CD4-positive, alpha-beta T cell (primary cell): ENCODE measurements at regions of chr3 and their contacts with region 1.

Region 1: DNA sequence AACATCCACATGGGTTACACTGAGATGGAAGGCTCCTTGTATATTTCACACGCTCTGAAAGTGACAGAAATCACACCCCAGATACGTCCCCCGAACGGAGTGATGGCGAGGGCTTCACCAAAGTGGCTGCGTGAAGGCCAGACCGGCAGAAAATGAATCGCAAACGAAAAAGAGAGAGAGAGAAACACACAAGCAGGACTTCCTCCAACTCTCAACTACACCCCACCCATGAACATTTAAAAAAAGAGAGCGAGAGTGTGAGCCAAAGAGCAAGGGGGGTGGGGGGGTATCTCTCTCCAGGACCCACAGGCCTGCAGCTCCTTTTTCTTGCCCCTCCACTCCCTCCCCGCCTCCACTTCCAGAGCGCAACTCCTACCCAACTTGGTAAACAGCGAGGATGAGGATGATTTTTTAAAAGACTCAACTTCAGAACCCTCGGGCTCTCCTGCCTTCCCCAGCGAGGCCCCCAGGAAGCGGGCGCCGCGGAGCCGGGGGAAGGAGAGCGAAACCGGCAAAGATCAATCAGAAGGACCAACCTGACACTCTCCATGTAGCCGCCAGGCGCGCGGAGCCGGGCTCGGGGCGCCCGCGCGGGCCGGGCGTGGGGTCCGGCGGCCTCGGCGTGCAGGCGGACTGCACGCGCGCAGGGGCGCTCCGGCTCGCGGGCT is 519.1 kb downstream of the FOXP1 start:
- DNase-seq: peak; percentile 45 to 86 (median 64)
- ATAC-seq: peak; percentile 41
- H3K4me3 ChIP-seq: peak overlapping the region; percentile 71
- H3K4me3 Mint-ChIP-seq: no peak overlapping the region
- H3K27ac ChIP-seq: peak overlapping the region; percentile 72 to 97
- H3K27ac Mint-ChIP-seq: no peak overlapping the region
- H3K4me1 ChIP-seq: peaks cover 29% of the 10 kb centered on the region
- H3K4me1 Mint-ChIP-seq: peaks cover 62% of the 10 kb centered on the region
- H3K27me3 ChIP-seq: no peaks in the 10 kb centered on the region
- H3K27me3 Mint-ChIP-seq: no peaks in the 10 kb centered on the region
- CTCF ChIP-seq: no peak

Region 2: GRCh38 chr3:70716832-70717231 is 347.6 kb before region 1 on chr3:
- CTCF ChIA-PET with region 1: no interaction called
- POLR2A ChIA-PET with region 1: no interaction called
- intact Hi-C with region 1: loop called in 1 of 2 experiments (anchors 10 kb)
- DNase-seq: peak in 5 of 14 experiments; percentile 0 to 25 (median 7)
- ATAC-seq: no peak
- H3K4me3 ChIP-seq: no peak overlapping the region
- H3K4me3 Mint-ChIP-seq: no peak overlapping the region
- H3K27ac ChIP-seq: no peak overlapping the region
- H3K27ac Mint-ChIP-seq: no peak overlapping the region
- H3K4me1 ChIP-seq: no peaks in the 10 kb centered on the region
- H3K4me1 Mint-ChIP-seq: no peaks in the 10 kb centered on the region
- H3K27me3 ChIP-seq: peaks cover 0 to 6% of the 10 kb centered on the region in 2 experiments
- H3K27me3 Mint-ChIP-seq: peaks cover 4% of the 10 kb centered on the region
- CTCF ChIP-seq: no peak

Region 3: DNA sequence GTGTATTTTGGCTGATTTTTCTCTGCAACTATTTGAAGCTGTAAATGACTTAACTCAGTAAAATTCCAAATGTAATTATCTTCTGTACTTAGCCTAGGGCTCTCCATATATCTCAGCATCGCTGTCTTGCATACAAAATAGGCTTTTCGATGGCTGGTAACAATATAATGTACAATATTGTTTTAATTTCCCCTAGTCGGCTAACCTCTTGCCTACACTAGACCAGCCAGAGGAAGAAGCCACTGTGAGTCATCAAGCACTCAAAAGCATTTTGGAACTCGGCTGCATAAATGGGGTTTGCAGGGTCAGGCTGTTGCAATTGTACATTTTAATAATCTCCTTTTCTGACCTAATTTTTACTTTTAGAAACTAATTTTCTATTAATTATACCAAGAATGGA is 64.7 kb before region 1 on chr3:
- CTCF ChIA-PET with region 1: no interaction called
- POLR2A ChIA-PET with region 1: no interaction called
- intact Hi-C with region 1: no loop called
- DNase-seq: peak in 1 of 14 experiments; percentile 24
- ATAC-seq: no peak
- H3K4me3 ChIP-seq: no peak overlapping the region
- H3K4me3 Mint-ChIP-seq: no peak overlapping the region
- H3K27ac ChIP-seq: no peak overlapping the region
- H3K27ac Mint-ChIP-seq: peak overlapping the region; percentile 42
- H3K4me1 ChIP-seq: peaks cover 3% of the 10 kb centered on the region
- H3K4me1 Mint-ChIP-seq: peaks cover 65% of the 10 kb centered on the region
- H3K27me3 ChIP-seq: no peaks in the 10 kb centered on the region
- H3K27me3 Mint-ChIP-seq: no peaks in the 10 kb centered on the region
- CTCF ChIP-seq: no peak

Region 4: GRCh38 chr3:71039332-71039731 is 25.1 kb before region 1 on chr3:
- CTCF ChIA-PET with region 1: interaction called, 3 read pairs
- POLR2A ChIA-PET with region 1: interaction called, 5 read pairs
- intact Hi-C with region 1: loop called in 1 of 2 experiments (anchors 2 kb)
- DNase-seq: peak in 8 of 14 experiments; percentile 6 to 68 (median 30)
- ATAC-seq: peak; percentile 87
- H3K4me3 ChIP-seq: no peak overlapping the region
- H3K4me3 Mint-ChIP-seq: peak overlapping the region; percentile 46
- H3K27ac ChIP-seq: peak overlapping the region in 1 of 2 donors; percentile 13
- H3K27ac Mint-ChIP-seq: peak overlapping the region; percentile 89
- H3K4me1 ChIP-seq: peaks cover 25% of the 10 kb centered on the region
- H3K4me1 Mint-ChIP-seq: peaks cover 96% of the 10 kb centered on the region
- H3K27me3 ChIP-seq: no peaks in the 10 kb centered on the region
- H3K27me3 Mint-ChIP-seq: no peaks in the 10 kb centered on the region
- CTCF ChIP-seq: no peak

Region 5: GRCh38 chr3:71087143-71088018 is 23.0 kb after region 1 on chr3:
- CTCF ChIA-PET with region 1: interaction called, 3 read pairs
- POLR2A ChIA-PET with region 1: interaction called, 19 read pairs
- intact Hi-C with region 1: loop called in 1 of 2 experiments (anchors 2 kb)
- DNase-seq: peak in 10 of 14 experiments; percentile 14 to 86 (median 47)
- ATAC-seq: peak; percentile 77
- H3K4me3 ChIP-seq: peak overlapping the region; percentile 11
- H3K4me3 Mint-ChIP-seq: peak overlapping the region; percentile 69
- H3K27ac ChIP-seq: peak overlapping the region; percentile 57 to 71
- H3K27ac Mint-ChIP-seq: peak overlapping the region; percentile 86
- H3K4me1 ChIP-seq: peaks cover 81% of the 10 kb centered on the region
- H3K4me1 Mint-ChIP-seq: peaks cover 86% of the 10 kb centered on the region
- H3K27me3 ChIP-seq: no peaks in the 10 kb centered on the region
- H3K27me3 Mint-ChIP-seq: no peaks in the 10 kb centered on the region
- CTCF ChIP-seq: no peak

Region 6: DNA sequence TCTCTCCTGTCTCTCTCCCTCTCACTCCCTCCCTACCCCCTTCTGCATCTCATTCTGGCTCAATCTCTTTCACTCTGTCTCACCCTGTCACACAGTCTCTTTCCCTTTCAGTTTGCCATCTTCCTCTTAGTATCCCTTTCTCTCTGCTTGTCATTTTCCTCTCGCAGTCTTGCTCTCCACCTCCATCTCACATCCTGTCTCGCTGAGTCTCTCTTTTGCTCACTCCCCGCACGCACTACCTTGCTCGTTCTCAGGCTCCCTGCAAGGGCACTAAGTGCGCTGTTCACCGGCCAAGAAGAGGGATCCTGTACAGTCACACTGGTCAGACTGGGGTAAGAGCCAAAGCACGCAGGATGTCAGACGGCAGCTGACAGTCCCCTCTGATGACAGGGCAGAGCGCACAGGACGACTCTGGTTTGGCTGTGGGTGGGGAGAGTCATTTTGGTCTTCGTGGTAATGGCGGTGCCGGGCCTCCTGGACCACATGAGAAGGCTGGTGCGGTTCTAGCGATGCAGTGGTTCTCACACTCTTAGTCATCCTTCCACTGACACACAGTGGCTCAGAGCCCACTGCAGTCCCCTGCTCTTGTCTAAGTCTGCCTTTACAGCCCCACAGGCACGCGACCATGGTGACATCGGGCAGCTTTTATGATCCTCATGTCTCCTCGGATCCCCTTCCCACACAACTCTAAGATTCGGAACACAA is 162.3 kb after region 1 on chr3:
- CTCF ChIA-PET with region 1: no interaction called
- POLR2A ChIA-PET with region 1: no interaction called
- intact Hi-C with region 1: loop called in 1 of 2 experiments (anchors 2 kb)
- DNase-seq: peak; percentile 52 to 87 (median 72)
- ATAC-seq: peak; percentile 71
- H3K4me3 ChIP-seq: peak overlapping the region; percentile 55
- H3K4me3 Mint-ChIP-seq: peak overlapping the region; percentile 69
- H3K27ac ChIP-seq: peak overlapping the region; percentile 59 to 68
- H3K27ac Mint-ChIP-seq: peak overlapping the region; percentile 87
- H3K4me1 ChIP-seq: peaks cover 24% of the 10 kb centered on the region
- H3K4me1 Mint-ChIP-seq: peaks cover 85% of the 10 kb centered on the region
- H3K27me3 ChIP-seq: no peaks in the 10 kb centered on the region
- H3K27me3 Mint-ChIP-seq: no peaks in the 10 kb centered on the region
- CTCF ChIP-seq: no peak

Region 7: DNA sequence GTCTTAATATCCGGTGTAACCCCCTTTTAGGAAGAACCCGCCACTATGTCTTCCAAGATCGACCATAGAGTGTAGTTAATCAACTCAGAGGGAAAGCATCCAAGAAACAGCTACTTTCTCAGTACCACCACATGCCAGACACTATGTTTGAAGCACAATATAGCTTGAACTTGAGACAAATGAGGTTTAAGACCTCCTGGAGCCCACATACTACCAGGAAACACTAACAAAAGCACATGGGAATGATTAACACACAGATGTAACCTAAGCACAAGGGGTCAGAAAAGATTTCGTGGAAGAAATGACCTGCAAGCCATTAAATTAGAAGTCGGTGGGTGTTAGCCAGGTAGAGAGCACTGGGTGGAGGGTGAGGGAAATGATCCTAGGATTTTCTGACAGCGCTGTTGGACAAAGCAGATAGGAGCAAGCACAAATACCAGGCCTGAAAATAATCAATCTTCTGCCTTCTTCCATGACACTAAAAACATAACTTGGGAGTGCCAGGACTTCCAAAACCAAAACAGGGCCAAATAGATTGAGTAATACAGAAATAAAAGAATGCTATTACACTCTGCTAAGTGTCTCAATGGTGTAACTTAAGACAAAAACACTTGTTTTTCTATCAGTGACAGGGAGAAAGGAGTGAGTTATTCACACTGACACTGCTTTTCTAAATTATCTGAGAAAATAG is 305.4 kb after region 1 on chr3:
- CTCF ChIA-PET with region 1: no interaction called
- POLR2A ChIA-PET with region 1: no interaction called
- intact Hi-C with region 1: loop called in 1 of 2 experiments (anchors 10 kb)
- DNase-seq: no peak
- ATAC-seq: no peak
- H3K4me3 ChIP-seq: no peak overlapping the region
- H3K4me3 Mint-ChIP-seq: no peak overlapping the region
- H3K27ac ChIP-seq: no peak overlapping the region
- H3K27ac Mint-ChIP-seq: peak overlapping the region; percentile 87
- H3K4me1 ChIP-seq: peaks cover 41% of the 10 kb centered on the region
- H3K4me1 Mint-ChIP-seq: peaks cover 82% of the 10 kb centered on the region
- H3K27me3 ChIP-seq: no peaks in the 10 kb centered on the region
- H3K27me3 Mint-ChIP-seq: no peaks in the 10 kb centered on the region
- CTCF ChIP-seq: no peak

Region 8: DNA sequence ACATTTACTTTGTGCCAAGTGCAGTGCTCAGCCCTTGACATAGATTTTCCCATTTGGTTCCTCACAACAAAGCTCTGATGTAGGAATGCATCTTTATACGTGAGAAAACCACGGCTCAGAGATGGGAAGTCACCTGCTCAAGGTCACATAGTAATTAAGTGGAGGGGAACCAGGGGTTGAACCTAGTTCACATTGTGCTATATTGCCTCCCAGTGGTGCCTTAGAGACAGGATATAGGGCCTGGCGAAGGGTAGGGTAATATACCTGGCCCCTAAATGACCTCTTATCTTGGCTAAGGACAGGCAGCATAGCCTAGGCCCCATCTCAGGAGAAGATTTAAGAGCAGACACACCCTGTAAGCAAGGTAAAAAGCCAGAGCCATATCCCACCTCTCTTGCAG is 447.6 kb after region 1 on chr3:
- CTCF ChIA-PET with region 1: no interaction called
- POLR2A ChIA-PET with region 1: no interaction called
- intact Hi-C with region 1: loop called in 1 of 2 experiments (anchors 10 kb)
- DNase-seq: peak in 9 of 14 experiments; percentile 20 to 85 (median 46)
- ATAC-seq: peak; percentile 99
- H3K4me3 ChIP-seq: no peak overlapping the region
- H3K4me3 Mint-ChIP-seq: no peak overlapping the region
- H3K27ac ChIP-seq: no peak overlapping the region
- H3K27ac Mint-ChIP-seq: no peak overlapping the region
- H3K4me1 ChIP-seq: peaks cover 22% of the 10 kb centered on the region
- H3K4me1 Mint-ChIP-seq: peaks cover 21% of the 10 kb centered on the region
- H3K27me3 ChIP-seq: no peaks in the 10 kb centered on the region
- H3K27me3 Mint-ChIP-seq: no peaks in the 10 kb centered on the region
- CTCF ChIP-seq: peak; percentile 70